Naive thymus-derived CD4-positive, alpha-beta T cell (primary cell): ENCODE measurements at regions of chr6 and their contacts with region 1.

Region 1: DNA sequence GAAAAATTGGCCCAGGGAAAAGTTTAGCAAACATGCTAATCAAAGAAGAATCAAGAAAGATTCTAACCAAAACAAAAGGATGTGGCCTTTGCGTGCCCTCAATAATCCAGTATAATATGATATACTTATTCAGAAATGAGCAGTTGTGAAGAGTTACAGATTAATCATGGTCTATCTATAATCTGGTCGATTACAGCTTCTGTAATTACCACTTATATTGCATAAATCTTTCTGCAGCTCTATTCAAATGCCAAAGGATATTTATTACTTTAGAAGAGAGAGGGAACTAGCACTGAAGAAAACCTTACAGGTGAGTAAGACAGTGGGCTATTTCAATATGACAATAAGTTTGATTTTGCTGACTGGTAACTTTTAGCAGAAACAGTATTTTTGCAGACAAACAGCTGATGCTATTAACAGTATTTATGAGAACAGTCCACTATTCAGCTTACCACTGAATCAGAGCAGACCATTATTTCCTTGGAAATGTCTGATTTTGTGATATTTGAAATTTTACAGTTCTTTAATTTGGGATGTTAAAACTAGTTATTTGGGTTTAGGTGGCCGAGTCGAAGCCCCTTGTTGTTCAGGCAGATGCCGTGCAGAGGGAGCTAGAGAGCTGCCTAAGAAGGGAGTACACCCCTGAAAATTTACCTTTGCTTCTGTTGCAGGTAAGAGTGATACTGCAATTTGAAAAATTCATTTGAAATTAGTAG is 92.2 kb downstream of the CEP57L1 start:
- DNase-seq: peak; percentile 19 to 68 (median 56)
- ATAC-seq: peak; percentile 91
- H3K4me3 ChIP-seq: no peak overlapping the region
- H3K4me3 Mint-ChIP-seq: no peak overlapping the region
- H3K27ac ChIP-seq: no peak overlapping the region
- H3K27ac Mint-ChIP-seq: no peak overlapping the region
- H3K4me1 ChIP-seq: no peaks in the 10 kb centered on the region
- H3K4me1 Mint-ChIP-seq: peaks cover 0 to 4% (median 0%) of the 10 kb centered on the region in 7 donors
- H3K27me3 ChIP-seq: peaks cover 0 to 3% of the 10 kb centered on the region in 2 donors
- H3K27me3 Mint-ChIP-seq: peaks cover 1 to 45% (median 8%) of the 10 kb centered on the region in 5 donors

Region 2: GRCh38 chr6:109236115-109237076 is 48.8 kb after region 1 on chr6:
- CTCF ChIA-PET with region 1: interaction called, 4 read pairs
- POLR2A ChIA-PET with region 1: interaction called, 3 read pairs
- intact Hi-C with region 1: loop called (anchors 1 kb)
- DNase-seq: peak in 3 of 9 donors; percentile 12 to 34 (median 32)
- ATAC-seq: peak; percentile 56
- H3K4me3 ChIP-seq: no peak overlapping the region
- H3K4me3 Mint-ChIP-seq: peak overlapping the region; percentile 0 to 73 (median 26)
- H3K27ac ChIP-seq: no peak overlapping the region
- H3K27ac Mint-ChIP-seq: peak overlapping the region in 8 of 9 donors; percentile 2 to 90 (median 42)
- H3K4me1 ChIP-seq: no peaks in the 10 kb centered on the region
- H3K4me1 Mint-ChIP-seq: peaks cover 6 to 25% (median 18%) of the 10 kb centered on the region in 7 donors
- H3K27me3 ChIP-seq: no peaks in the 10 kb centered on the region
- H3K27me3 Mint-ChIP-seq: peaks cover 0 to 3% (median 0%) of the 10 kb centered on the region in 5 donors

Region 3: DNA sequence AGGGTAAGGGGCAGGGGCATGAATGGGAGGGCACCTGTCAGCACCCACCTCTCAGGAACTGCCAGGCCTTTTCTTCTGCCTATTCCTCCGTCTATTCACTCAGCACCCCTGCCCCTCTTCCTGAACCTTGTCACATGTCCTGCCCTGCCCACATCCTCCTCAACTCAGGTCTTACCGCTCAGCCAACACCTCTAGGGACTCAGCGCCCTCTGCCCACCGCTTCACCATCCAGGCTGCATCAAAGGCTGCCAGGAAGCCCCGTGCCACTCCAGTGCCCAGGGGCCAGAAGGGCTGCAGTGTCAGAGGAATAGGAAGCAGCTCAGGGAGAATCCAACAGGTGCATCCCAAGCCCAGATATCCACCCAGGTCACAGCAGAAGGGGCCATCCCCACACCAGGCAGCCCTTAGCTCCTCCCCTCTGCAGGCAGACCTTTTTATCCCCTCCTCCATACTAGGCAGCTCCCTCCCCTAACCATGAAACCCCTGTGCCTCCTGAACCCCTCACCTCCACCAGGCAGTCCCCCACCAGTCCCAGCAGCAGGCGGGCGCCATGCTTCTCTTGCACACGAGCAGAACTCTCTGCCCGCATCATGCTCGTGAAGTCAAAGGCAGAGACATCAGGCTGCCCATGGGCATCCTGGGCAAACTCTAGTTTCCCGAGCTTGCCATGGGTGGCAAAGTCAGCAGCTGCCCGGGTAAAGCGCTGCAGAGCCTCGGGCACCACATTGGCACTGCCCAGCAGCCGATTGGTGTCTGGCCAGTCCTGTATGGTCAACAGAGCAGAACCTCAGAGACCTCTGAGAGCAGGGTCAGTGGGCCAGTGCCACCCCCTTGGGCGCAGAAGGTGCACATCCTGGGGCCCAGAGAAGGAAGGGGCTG is 262.5 kb after region 1 on chr6:
- CTCF ChIA-PET with region 1: no interaction called
- POLR2A ChIA-PET with region 1: no interaction called
- intact Hi-C with region 1: loop called in 1 of 2 experiments (anchors 1 kb)
- DNase-seq: peak in 6 of 9 donors; percentile 37 to 53 (median 48)
- ATAC-seq: peak; percentile 47
- H3K4me3 ChIP-seq: no peak overlapping the region
- H3K4me3 Mint-ChIP-seq: peak overlapping the region; percentile 21 to 81 (median 61)
- H3K27ac ChIP-seq: peak overlapping the region; percentile 44
- H3K27ac Mint-ChIP-seq: peak overlapping the region; percentile 63 to 92 (median 86)
- H3K4me1 ChIP-seq: peaks cover 30 to 31% of the 10 kb centered on the region in 2 donors
- H3K4me1 Mint-ChIP-seq: peaks cover 29 to 62% (median 55%) of the 10 kb centered on the region in 7 donors
- H3K27me3 ChIP-seq: no peaks in the 10 kb centered on the region
- H3K27me3 Mint-ChIP-seq: no peaks in the 10 kb centered on the region

Region 4: DNA sequence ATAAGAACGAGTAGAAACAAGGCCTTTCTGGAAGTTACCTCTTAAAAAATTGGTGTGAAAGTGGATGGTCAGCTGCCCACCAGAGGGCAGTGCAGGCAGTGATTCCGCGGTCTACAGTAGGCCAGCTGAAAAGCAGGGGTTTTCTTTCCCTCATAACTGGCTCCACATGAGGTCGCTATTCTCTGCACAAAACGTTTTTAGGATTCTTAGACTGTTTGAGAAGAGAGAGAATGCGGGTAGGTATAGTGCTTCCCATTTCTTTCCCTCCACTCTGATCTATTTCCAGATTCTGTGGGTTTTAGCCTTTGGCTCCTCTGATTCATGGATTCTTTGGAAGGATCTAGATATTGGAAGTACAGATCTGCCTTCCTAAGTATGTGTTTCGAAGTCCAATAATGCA is 517.7 kb after region 1 on chr6:
- CTCF ChIA-PET with region 1: no interaction called
- POLR2A ChIA-PET with region 1: no interaction called
- intact Hi-C with region 1: loop called in 1 of 2 experiments (anchors 5 kb)
- DNase-seq: peak; percentile 46 to 74 (median 61)
- ATAC-seq: peak; percentile 99
- H3K4me3 ChIP-seq: no peak overlapping the region
- H3K4me3 Mint-ChIP-seq: no peak overlapping the region
- H3K27ac ChIP-seq: no peak overlapping the region
- H3K27ac Mint-ChIP-seq: no peak overlapping the region
- H3K4me1 ChIP-seq: no peaks in the 10 kb centered on the region
- H3K4me1 Mint-ChIP-seq: peaks cover 7 to 62% (median 38%) of the 10 kb centered on the region in 7 donors
- H3K27me3 ChIP-seq: no peaks in the 10 kb centered on the region
- H3K27me3 Mint-ChIP-seq: no peaks in the 10 kb centered on the region

Region 5: GRCh38 chr6:110039364-110039980 is 851.9 kb after region 1 on chr6:
- CTCF ChIA-PET with region 1: interaction called, 8 read pairs
- POLR2A ChIA-PET with region 1: no interaction called
- intact Hi-C with region 1: loop called (anchors 1 to 5 kb)
- DNase-seq: peak; percentile 66 to 81 (median 78)
- ATAC-seq: peak; percentile 92
- H3K4me3 ChIP-seq: peak overlapping the region; percentile 54
- H3K4me3 Mint-ChIP-seq: peak overlapping the region; percentile 89 to 97 (median 90)
- H3K27ac ChIP-seq: peak overlapping the region; percentile 53
- H3K27ac Mint-ChIP-seq: peak overlapping the region; percentile 80 to 98 (median 92)
- H3K4me1 ChIP-seq: peaks cover 0 to 14% of the 10 kb centered on the region in 2 donors
- H3K4me1 Mint-ChIP-seq: peaks cover 9 to 17% (median 13%) of the 10 kb centered on the region in 7 donors
- H3K27me3 ChIP-seq: no peaks in the 10 kb centered on the region
- H3K27me3 Mint-ChIP-seq: no peaks in the 10 kb centered on the region